ENCODE measurements at regions of chr21 and their contacts with region 1.

Region 1: GRCh38 chr21:16194095-16194787 is 464.5 kb downstream of the USP25 start:
- DNase-seq: peak; percentile 75 to 80
- ATAC-seq: peak; percentile 88 to 90
- H3K4me3 ChIP-seq: peak overlapping the region; percentile 52 to 63 (median 60)
- H3K27ac ChIP-seq: peak overlapping the region; percentile 83 to 88 (median 84)
- H3K4me1 ChIP-seq: peaks cover 14 to 17% of the 10 kb centered on the region in 2 donors
- H3K27me3 ChIP-seq: no peaks in the 10 kb centered on the region
- CTCF ChIP-seq: peak in 3 of 5 experiments; percentile 17 to 55 (median 44)
- POLR2A ChIP-seq: no peak

Region 2: GRCh38 chr21:16082038-16082816 is 112.0 kb before region 1 on chr21:
- in situ Hi-C with region 1: loop called in 1 of 4 experiments (anchors 10 kb)
- intact Hi-C with region 1: loop called (anchors 1 kb)
- DNase-seq: no peak
- ATAC-seq: no peak
- H3K4me3 ChIP-seq: peak overlapping the region in 1 of 4 donors; percentile 0
- H3K27ac ChIP-seq: no peak overlapping the region
- H3K4me1 ChIP-seq: peaks cover 3 to 4% of the 10 kb centered on the region in 2 donors
- H3K27me3 ChIP-seq: no peaks in the 10 kb centered on the region
- CTCF ChIP-seq: peak in 4 of 5 experiments; percentile 29 to 61 (median 46)
- POLR2A ChIP-seq: no peak

Region 3: DNA sequence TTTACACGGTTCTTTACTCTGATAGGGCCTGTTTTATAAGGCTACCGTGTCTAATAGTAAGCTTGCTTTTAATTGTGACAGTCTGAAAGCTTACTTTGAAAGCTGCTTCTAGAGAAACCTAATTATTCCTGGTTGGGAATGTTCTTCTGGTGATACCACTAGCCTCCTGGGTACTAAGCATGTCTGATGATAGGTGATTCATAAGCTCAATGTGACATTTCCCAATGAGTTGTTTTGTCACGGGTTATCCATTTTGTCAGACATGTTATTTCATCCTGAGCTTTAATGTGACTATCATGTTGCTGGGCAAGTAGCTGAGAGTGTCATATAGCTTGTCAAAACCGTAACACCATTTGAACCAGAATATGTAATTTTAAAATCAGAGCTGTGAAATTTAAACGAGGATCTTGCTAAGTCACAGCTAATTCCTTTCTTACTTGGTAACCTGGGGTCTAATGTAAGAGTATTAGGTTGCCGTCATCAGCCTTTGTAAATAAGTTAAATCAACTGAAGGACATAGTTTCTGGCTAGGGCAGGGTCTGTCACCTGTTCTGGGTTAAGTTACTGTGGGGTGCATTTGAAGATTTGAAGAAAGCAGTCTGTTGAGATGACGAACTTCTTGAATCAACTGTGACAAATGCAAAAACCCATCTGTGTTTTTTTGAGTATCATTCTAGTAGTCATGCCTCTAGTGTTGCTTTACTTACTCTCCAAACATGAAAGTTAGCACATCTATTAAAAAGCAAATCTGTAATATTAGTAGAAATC is 64.8 kb after region 1 on chr21:
- in situ Hi-C with region 1: no loop called
- intact Hi-C with region 1: loop called (anchors 2 kb)
- DNase-seq: peak; percentile 22 to 27
- ATAC-seq: peak; percentile 98 to 99
- H3K4me3 ChIP-seq: peak overlapping the region; percentile 15 to 34 (median 31)
- H3K27ac ChIP-seq: peak overlapping the region; percentile 72 to 90 (median 83)
- H3K4me1 ChIP-seq: peaks cover 15 to 31% of the 10 kb centered on the region in 2 donors
- H3K27me3 ChIP-seq: no peaks in the 10 kb centered on the region
- CTCF ChIP-seq: no peak
- POLR2A ChIP-seq: peak; percentile 19 to 73

Region 4: GRCh38 chr21:16302851-16303282 is 108.6 kb after region 1 on chr21:
- in situ Hi-C with region 1: loop called in 3 of 4 experiments (anchors 5 to 10 kb)
- intact Hi-C with region 1: loop called (anchors 2 kb)
- DNase-seq: peak; percentile 62 to 76
- ATAC-seq: peak; percentile 89 to 93
- H3K4me3 ChIP-seq: peak overlapping the region in 3 of 4 donors; percentile 5 to 31 (median 26)
- H3K27ac ChIP-seq: peak overlapping the region; percentile 78 to 85 (median 82)
- H3K4me1 ChIP-seq: peaks cover 15 to 20% of the 10 kb centered on the region in 2 donors
- H3K27me3 ChIP-seq: no peaks in the 10 kb centered on the region
- CTCF ChIP-seq: no peak
- POLR2A ChIP-seq: peak in 1 of 2 donors; percentile 39

Region 5: DNA sequence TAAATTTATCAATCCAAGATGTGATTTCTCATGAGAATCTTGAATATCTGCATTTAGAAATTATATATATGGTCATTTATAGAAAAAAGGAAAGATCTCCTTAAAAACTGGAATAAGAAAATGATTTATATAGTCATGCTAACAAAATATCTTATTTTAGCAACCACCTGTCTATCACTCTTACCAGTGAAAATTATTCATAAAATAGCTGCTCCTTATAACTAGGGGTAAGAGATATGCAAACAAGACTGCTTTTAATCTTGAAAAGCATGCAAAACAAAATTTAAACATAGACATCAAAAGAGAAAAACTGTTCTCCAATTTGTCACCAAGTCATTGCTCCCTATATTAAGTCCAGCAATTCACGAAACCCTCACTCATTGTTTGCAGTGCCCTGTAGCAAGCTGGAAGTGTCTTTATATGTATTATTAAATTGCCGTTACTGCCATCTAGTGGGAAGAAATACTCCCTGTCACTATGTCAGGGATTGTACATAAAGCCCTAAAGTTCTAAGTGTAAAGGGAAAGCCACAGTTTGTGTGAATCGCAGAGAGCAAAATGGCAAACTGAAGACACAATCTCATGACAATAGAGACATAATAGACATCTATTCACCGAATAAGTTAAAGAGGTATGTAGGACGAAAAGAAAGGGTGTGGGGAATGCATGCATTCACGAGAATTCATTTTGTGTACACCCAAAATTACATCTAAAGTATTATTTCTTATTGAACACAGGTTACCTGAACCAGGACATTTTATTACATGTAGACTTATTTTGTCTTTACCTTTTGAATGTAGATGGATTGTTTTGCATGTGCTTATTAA is 136.1 kb after region 1 on chr21:
- in situ Hi-C with region 1: no loop called
- intact Hi-C with region 1: loop called (anchors 1 kb)
- DNase-seq: peak in 1 of 2 donors; percentile 26
- ATAC-seq: peak; percentile 98 to 99
- H3K4me3 ChIP-seq: no peak overlapping the region
- H3K27ac ChIP-seq: peak overlapping the region in 1 of 4 donors; percentile 13
- H3K4me1 ChIP-seq: peaks cover 0 to 11% of the 10 kb centered on the region in 2 donors
- H3K27me3 ChIP-seq: no peaks in the 10 kb centered on the region
- CTCF ChIP-seq: peak; percentile 59 to 79 (median 70)
- POLR2A ChIP-seq: no peak

Region 6: GRCh38 chr21:16534408-16535101 is 340.3 kb after region 1 on chr21:
- in situ Hi-C with region 1: no loop called
- intact Hi-C with region 1: loop called (anchors 10 kb)
- DNase-seq: peak; percentile 66 to 75
- ATAC-seq: peak; percentile 68 to 69
- H3K4me3 ChIP-seq: peak overlapping the region; percentile 47 to 64 (median 58)
- H3K27ac ChIP-seq: peak overlapping the region; percentile 84 to 90 (median 88)
- H3K4me1 ChIP-seq: peaks cover 17 to 27% of the 10 kb centered on the region in 2 donors
- H3K27me3 ChIP-seq: no peaks in the 10 kb centered on the region
- CTCF ChIP-seq: peak in 1 of 5 experiments; percentile 9
- POLR2A ChIP-seq: no peak

Region 7: DNA sequence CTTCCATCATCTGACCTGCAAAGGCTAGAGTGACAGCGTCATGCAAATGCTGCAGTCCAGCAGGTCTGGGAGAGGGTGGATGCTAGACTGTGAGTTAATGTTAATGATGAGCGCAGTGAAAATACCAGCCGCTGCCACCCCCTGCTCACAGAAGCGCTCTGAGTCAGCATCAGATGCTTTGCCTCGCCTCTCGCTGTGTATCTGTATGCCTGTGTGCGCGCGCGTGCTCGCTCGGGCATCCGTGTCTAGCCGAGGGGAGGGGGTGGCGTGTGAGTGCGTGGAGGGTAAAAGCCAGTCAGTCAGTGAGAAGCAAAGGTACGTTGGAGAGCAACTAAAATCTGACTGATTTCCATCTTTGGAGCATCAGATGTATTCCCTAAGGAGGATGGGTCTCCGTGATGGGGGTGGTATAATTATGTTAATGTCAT is 394.2 kb after region 1 on chr21:
- in situ Hi-C with region 1: loop called in 1 of 4 experiments (anchors 25 kb)
- intact Hi-C with region 1: no loop called
- DNase-seq: peak; percentile 63 to 73
- ATAC-seq: peak; percentile 71 to 72
- H3K4me3 ChIP-seq: peak overlapping the region; percentile 47 to 55 (median 50)
- H3K27ac ChIP-seq: peak overlapping the region; percentile 74 to 80 (median 80)
- H3K4me1 ChIP-seq: peaks cover 13 to 18% of the 10 kb centered on the region in 2 donors
- H3K27me3 ChIP-seq: no peaks in the 10 kb centered on the region
- CTCF ChIP-seq: no peak
- POLR2A ChIP-seq: peak; percentile 44 to 50

Measured in gastrocnemius medialis (tissue), 4 donors.